Sciatic nerve (tissue), 2 donors: ENCODE measurements at regions of chr5 and their contacts with region 1.

Region 1: GRCh38 chr5:126600631-126601511 is at the start of gene PHAX:
- DNase-seq: peak; percentile 85
- ATAC-seq: peak; percentile 95
- total RNA-seq, gene PHAX: 42.5 TPM

Region 2: DNA sequence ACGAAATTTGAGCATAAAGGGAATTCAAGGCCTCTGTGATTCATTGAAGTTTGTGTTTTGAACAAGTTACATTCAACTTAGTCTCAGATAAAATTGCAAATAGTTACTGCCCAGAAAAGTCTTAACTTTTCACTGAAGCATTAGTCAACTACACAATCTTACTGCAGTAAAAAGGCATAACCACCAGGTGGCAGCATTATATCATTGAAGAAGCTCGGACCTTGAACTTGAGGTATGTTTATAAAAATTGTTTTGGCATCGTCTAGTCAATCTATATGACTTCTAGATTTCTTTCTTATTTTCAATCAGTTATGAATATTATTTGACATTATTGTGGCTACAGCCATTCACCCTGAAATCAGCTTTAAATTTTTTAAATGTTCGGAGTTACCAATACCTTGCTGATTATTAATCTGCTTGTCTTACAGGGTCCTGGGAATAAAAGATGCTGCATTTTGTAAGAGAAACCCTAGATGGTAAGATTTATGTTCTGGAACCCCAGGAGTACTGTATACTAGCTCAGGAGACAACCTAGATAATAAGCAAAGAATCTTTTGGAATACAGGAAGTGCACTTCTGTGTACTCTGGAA is 261.6 kb before region 1 on chr5:
- intact Hi-C with region 1: loop called (anchors 10 kb)
- DNase-seq: no peak
- ATAC-seq: peak; percentile 50

Region 3: GRCh38 chr5:126422989-126423788 is 177.7 kb before region 1 on chr5 and contains the start of gene GRAMD2B:
- intact Hi-C with region 1: no loop called
- DNase-seq: peak; percentile 86
- ATAC-seq: peak; percentile 97
- total RNA-seq, gene GRAMD2B: 42.3 TPM